Body of pancreas (tissue), 4 donors: ENCODE measurements at regions of chr10 and their contacts with region 1.

Region 1: GRCh38 chr10:29120237-29120636 is 168.6 kb upstream of the LYZL1 start:
- DNase-seq: no peak
- ATAC-seq: no peak
- H3K4me3 ChIP-seq: no peak overlapping the region
- H3K27ac ChIP-seq: peak overlapping the region in 2 of 4 donors; percentile 12 to 44
- H3K4me1 ChIP-seq: no peaks in the 10 kb centered on the region
- H3K27me3 ChIP-seq: no peaks in the 10 kb centered on the region
- CTCF ChIP-seq: no peak
- POLR2A ChIP-seq: no peak

Region 2: DNA sequence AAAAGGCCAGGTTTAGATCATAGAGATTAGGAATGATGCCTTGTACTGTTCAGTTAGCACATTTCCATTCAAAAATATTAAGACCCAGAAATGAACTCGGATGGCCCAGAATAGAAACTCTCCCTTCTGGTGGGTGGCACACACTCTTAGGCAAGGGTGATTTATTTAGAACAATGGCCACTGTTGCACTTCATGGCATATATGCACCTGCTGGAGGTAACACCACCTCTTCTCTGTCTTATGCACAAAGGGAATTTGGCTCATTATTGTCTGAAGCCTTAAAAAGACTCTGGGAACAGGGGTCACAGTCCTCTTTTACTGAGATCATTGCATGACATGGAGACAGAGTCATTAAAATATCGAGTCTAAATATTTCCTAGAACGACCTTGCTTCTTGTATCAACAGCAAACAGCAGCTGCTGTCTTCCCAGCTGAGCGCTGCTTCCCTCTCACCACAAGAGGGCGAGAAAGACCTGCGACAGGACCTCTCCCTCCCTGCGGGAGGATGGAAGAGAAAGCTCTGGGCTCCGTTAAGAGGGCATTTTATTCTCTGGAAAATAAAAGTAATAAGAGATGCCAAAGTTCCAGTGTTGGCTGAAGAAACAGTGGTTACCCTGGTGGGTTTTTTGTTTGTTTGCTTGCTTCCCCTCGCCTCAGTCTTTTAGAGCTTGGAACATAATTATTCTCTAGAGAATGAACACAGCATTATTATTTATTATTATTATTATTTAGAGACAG is 456.5 kb before region 1 on chr10:
- intact Hi-C with region 1: loop called (anchors 10 kb)
- DNase-seq: peak; percentile 87 to 88 (median 88)
- ATAC-seq: peak; percentile 96
- H3K4me3 ChIP-seq: no peak overlapping the region
- H3K27ac ChIP-seq: peak overlapping the region in 1 of 4 donors; percentile 43
- H3K4me1 ChIP-seq: peaks cover 14% of the 10 kb centered on the region
- H3K27me3 ChIP-seq: peaks cover 0 to 16% of the 10 kb centered on the region in 2 donors
- CTCF ChIP-seq: peak; percentile 89 to 98 (median 96)
- POLR2A ChIP-seq: no peak

Region 3: GRCh38 chr10:29229258-29229705 is 109.0 kb after region 1 on chr10:
- intact Hi-C with region 1: no loop called
- DNase-seq: no peak
- ATAC-seq: no peak
- H3K4me3 ChIP-seq: no peak overlapping the region
- H3K27ac ChIP-seq: no peak overlapping the region
- H3K4me1 ChIP-seq: no peaks in the 10 kb centered on the region
- H3K27me3 ChIP-seq: no peaks in the 10 kb centered on the region
- CTCF ChIP-seq: no peak
- POLR2A ChIP-seq: no peak

Region 4: DNA sequence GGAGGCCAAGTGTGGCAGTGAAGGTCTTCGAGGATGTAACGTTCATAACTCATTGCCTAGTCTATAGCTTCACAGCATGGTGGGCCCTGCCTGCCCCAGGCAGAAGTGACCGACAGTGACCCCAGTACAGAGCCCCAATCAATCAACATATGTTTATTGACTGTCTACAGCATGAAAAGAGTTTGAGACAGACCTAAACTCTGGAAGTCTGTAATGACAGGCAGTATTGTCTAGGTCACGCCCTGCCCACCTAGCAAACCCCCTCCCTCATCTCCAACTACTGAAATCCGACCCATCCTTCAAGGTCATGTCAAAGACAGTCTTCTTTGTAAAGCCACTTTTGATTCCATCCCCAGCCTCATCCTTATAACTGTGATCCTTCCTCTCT is 212.5 kb after region 1 on chr10:
- intact Hi-C with region 1: no loop called
- DNase-seq: no peak
- ATAC-seq: no peak
- H3K4me3 ChIP-seq: no peak overlapping the region
- H3K27ac ChIP-seq: no peak overlapping the region
- H3K4me1 ChIP-seq: no peaks in the 10 kb centered on the region
- H3K27me3 ChIP-seq: no peaks in the 10 kb centered on the region
- CTCF ChIP-seq: no peak
- POLR2A ChIP-seq: no peak

Region 5: GRCh38 chr10:29386342-29386999 is 266.2 kb after region 1 on chr10:
- intact Hi-C with region 1: no loop called
- DNase-seq: no peak
- ATAC-seq: peak; percentile 60
- H3K4me3 ChIP-seq: no peak overlapping the region
- H3K27ac ChIP-seq: no peak overlapping the region
- H3K4me1 ChIP-seq: peaks cover 7% of the 10 kb centered on the region
- H3K27me3 ChIP-seq: no peaks in the 10 kb centered on the region
- CTCF ChIP-seq: peak; percentile 44 to 87 (median 75)
- POLR2A ChIP-seq: no peak